ENCODE measurements at regions of chr3 and their contacts with region 1.

Region 1: GRCh38 chr3:185659942-185660921 is 74.1 kb downstream of the SENP2 start:
- DNase-seq: peak; percentile 88
- H3K4me3 ChIP-seq: no peak overlapping the region
- H3K27ac ChIP-seq: no peak overlapping the region
- H3K4me1 ChIP-seq: peaks cover 5% of the 10 kb centered on the region
- H3K27me3 ChIP-seq: no peaks in the 10 kb centered on the region
- CTCF ChIP-seq: peak; percentile 99

Region 2: DNA sequence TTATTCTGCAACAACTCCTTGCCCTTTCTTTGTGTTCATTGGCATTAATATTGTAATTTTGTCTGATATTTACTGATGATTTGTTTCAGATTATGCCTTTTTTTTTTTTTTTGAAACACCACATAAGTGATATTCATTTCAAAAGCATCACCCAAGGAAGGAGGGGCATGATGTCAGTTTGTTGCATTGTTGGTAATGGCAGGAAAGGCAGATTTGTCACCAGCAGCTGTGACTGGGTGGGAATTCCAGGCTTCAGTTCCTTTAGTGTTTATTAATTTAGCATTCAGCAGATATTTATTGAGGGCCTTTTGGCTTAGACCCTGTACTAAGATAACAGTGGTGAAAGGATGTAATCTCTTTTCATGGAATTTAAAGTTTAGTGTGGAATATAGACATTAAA is 54.7 kb before region 1 on chr3:
- CTCF ChIA-PET with region 1: interaction called, 15 read pairs
- POLR2A ChIA-PET with region 1: no interaction called
- intact Hi-C with region 1: no loop called
- DNase-seq: no peak
- H3K4me3 ChIP-seq: no peak overlapping the region
- H3K27ac ChIP-seq: no peak overlapping the region
- H3K4me1 ChIP-seq: no peaks in the 10 kb centered on the region
- H3K27me3 ChIP-seq: no peaks in the 10 kb centered on the region
- CTCF ChIP-seq: no peak

Region 3: DNA sequence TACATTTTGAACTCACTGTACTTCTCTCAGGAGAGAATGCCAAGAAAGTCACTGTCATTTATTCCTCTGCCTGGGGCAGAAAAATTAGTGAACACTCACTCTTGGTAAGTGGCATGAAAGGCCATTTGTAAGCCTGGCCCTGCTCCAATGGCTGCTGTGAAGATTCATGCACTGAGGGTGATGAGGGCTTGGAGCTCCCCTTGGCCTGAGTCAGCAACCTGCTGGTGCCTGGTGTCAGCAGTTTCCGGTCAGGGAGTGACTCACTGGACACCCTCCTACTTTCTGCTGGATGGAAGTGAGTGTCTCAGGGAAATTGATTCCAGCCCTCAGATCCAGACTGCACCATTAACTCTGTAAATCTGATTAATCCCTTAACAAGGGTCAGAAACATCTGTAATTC is 240.0 kb after region 1 on chr3:
- CTCF ChIA-PET with region 1: no interaction called
- POLR2A ChIA-PET with region 1: no interaction called
- intact Hi-C with region 1: loop called (anchors 5 kb)
- DNase-seq: peak; percentile 70
- H3K4me3 ChIP-seq: no peak overlapping the region
- H3K27ac ChIP-seq: no peak overlapping the region
- H3K4me1 ChIP-seq: no peaks in the 10 kb centered on the region
- H3K27me3 ChIP-seq: no peaks in the 10 kb centered on the region
- CTCF ChIP-seq: no peak

Region 4: DNA sequence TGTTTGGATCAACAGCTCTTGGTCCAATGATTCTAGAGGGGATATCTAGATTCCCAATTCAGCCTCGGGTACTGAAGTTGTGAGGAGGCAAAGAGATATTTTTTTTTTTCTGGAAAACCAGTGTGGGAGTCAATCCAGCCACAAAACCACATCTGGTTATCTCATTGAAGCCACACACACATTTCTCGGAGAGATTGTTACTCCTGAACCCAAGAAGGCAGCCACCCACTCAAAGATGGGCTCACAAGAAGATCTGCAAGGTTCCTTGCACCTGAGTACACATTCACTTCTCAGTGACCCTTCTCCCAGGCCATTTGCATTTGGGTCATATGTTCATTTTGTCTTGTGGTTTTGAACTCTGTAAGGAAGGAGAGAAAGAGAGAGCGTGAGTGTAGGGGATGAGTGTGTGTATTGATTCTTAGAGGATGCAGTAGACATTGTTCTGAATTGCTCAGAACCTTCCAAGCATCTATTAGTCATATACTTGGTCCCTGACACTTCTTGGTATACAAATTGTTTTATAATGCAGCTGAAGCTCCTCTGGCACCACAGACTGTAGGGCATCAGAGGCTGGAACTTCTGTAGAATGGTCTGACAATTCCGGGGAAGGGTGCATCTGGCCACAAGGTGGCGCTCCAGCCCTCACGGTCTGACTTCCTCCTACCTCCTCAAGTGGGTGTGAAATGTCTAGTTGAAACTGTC is 316.9 kb after region 1 on chr3:
- CTCF ChIA-PET with region 1: interaction called, 4 read pairs
- POLR2A ChIA-PET with region 1: no interaction called
- intact Hi-C with region 1: loop called (anchors 5 kb)
- DNase-seq: peak; percentile 82
- H3K4me3 ChIP-seq: no peak overlapping the region
- H3K27ac ChIP-seq: no peak overlapping the region
- H3K4me1 ChIP-seq: no peaks in the 10 kb centered on the region
- H3K27me3 ChIP-seq: no peaks in the 10 kb centered on the region
- CTCF ChIP-seq: peak; percentile 95

Region 5: GRCh38 chr3:186277268-186277909 is 617.2 kb after region 1 on chr3:
- CTCF ChIA-PET with region 1: interaction called, 9 read pairs
- POLR2A ChIA-PET with region 1: no interaction called
- intact Hi-C with region 1: loop called (anchors 10 kb)
- DNase-seq: peak; percentile 83
- H3K4me3 ChIP-seq: no peak overlapping the region
- H3K27ac ChIP-seq: no peak overlapping the region
- H3K4me1 ChIP-seq: no peaks in the 10 kb centered on the region
- H3K27me3 ChIP-seq: no peaks in the 10 kb centered on the region
- CTCF ChIP-seq: peak; percentile 82